ENCODE measurements at regions of chr1 and their contacts with region 1.

Region 1: DNA sequence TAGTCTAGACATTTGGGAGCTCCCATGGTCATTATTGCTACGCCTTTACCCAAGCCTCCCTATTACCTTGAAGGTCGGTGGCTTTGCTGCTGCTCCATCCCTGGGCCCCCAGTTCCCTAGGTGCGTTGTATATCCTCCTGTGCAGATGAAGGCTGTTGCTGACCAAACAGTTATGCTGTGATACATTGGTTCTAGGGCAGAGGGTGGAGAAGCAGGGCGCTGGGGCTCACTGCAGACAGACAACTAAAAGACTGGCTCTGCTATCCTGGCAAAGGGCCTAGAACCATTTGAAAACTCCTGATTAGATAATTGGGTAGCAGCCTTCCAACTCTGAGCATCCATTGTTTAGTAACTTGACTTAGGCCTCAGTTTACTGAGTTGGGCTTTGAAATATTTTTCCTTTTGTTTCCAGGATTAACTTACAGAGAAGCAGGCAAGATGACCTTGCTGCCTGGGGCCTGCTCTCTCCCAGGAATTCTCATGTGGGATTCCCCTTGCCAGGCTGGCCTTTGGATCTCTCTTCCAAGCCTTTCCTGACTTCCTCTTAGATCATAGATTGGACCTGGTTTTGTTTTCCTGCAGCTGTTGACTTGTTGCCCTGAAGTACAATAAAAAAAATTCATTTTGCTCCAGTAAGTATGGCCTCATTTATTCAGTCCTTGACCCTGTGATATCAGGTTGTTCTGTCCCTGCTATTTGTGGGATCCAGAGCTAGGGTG is 15.5 kb downstream of the CHI3L2 start:
- DNase-seq: no peak
- H3K4me3 ChIP-seq: no peak overlapping the region
- H3K27ac ChIP-seq: no peak overlapping the region
- H3K4me1 ChIP-seq: no peaks in the 10 kb centered on the region
- H3K27me3 ChIP-seq: no peaks in the 10 kb centered on the region
- CTCF ChIP-seq: no peak

Region 2: GRCh38 chr1:111290630-111291029 is 47.7 kb after region 1 on chr1 and contains the start of gene CHIA:
- CTCF ChIA-PET with region 1: no interaction called
- dilution Hi-C with region 1: loop called (anchors 5 kb)
- in situ Hi-C with region 1: no loop called
- intact Hi-C with region 1: no loop called
- DNase-seq: peak; percentile 47
- H3K4me3 ChIP-seq: no peak within 1 kb of the TSS
- H3K27ac ChIP-seq: no peak within 1 kb of the TSS
- H3K4me1 ChIP-seq: no peaks in the 10 kb centered on the region
- H3K27me3 ChIP-seq: no peaks in the 10 kb centered on the region
- CTCF ChIP-seq: no peak
- total RNA-seq, gene CHIA: not detected